Activated naive CD4-positive, alpha-beta T cell treated with anti-CD3 and anti-CD28 coated beads for 36 hours (primary cell): ENCODE measurements at regions of chr6 and their contacts with region 1.

Region 1: DNA sequence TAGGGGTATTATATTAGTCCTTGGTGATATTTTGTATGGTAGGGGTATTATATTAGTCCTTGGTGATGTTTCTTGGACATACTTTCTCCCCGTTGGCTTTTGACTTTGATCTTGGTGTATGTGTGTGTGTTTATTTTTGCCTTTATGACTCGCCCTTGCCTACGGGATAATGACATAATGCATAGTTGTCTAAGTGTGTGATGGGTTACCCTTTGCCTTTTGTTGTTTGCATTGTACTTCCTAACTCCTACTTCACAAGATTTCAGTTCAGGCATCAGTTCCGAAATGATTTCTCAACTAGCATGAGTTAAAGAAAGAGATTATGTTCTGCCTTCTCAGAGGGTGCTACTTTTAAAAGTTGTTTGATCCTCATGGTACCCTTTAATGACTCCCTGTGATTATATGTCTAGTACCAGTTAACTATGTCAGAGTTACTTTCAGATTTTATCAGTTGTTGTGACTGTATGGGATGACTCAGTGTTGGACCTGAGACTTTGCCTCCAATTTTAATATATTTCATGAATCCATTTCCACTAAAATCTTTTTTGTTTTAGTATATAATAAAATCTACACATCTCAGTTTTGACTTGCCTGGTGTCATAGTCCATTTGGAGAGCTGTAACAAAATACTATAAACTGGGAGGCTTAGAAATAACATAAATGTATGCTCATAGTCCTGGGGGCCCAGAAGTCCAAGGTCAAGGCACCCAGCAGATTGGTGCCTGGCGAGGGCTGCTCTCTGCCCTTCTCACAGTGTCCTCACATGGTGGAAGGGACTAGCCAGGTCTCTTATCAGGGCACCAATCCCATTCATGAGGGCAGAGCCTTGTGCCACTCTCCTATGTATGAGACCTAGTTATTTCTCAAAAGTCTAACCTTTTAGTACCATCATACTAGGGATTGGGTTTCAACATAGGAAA is 34.1 kb downstream of the CDYL start:
- DNase-seq: no peak
- H3K4me3 Mint-ChIP-seq: no peak overlapping the region
- H3K27ac Mint-ChIP-seq: peak overlapping the region; percentile 20
- H3K4me1 Mint-ChIP-seq: peaks cover 66% of the 10 kb centered on the region
- H3K27me3 Mint-ChIP-seq: no peaks in the 10 kb centered on the region

Region 2: DNA sequence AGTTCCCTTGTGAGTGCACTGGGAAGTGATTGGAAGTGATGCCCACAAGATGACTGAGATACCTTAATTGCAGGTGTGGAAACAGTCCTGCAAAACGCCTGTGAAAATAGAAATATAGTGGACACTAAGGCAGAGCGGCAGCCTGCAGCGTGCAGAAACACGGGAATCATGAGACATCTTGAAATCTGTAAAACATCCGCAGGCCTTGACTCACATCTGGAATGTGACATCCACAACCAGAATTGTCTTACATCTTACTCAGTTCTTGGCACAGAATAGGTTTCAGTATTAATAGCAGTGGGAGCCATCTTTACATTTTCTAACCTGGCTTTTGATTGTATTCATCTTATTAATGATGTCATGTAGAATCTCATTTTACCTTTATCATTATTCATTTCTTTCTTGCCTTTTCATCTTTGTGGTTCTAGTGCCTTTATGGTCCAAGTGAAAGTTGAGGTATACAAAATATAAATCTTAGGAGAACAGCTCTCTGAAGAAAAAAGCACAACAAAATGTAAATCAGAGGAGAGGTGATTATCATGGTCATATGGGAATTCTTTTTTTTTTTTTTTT is 10.5 kb after region 1 on chr6:
- CTCF ChIA-PET with region 1: interaction called, 3 read pairs
- intact Hi-C with region 1: loop called (anchors 1 kb)
- DNase-seq: peak; percentile 23
- H3K4me3 Mint-ChIP-seq: no peak overlapping the region
- H3K27ac Mint-ChIP-seq: no peak overlapping the region
- H3K4me1 Mint-ChIP-seq: peaks cover 32% of the 10 kb centered on the region
- H3K27me3 Mint-ChIP-seq: no peaks in the 10 kb centered on the region

Region 3: DNA sequence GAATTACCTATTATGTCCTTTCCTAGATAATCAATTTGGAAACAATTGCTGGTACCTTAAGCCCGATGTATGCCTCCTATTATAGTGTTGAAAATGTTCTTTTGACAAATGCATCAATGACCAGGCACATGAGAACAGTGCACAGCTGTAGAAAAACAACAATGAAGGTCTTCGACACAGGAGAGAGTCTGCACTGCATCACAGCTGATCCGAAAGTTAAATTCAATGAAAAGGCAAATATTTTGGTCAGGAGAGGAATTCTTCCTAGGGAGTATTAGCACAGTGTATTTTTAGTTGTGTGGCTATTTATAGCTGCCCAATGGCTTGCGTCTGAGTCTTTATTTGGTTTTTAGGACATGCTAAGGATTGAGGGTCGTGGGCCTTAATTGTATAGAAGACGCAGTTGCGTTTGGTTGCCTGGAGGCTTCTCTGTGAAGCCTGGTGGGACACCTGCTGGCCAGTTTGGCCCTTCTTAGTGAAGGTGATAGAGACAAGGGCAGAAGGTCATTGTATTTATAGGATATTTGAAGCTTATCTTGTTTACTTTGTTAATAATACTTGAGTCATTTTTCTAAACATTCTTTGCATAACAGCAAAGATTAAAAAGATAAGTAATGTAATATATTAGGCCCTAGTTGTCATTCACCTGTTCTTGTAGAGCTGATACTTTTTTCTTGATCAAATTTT is 38.3 kb after region 1 on chr6:
- CTCF ChIA-PET with region 1: no interaction called
- intact Hi-C with region 1: no loop called
- DNase-seq: peak; percentile 21
- H3K4me3 Mint-ChIP-seq: no peak overlapping the region
- H3K27ac Mint-ChIP-seq: no peak overlapping the region
- H3K4me1 Mint-ChIP-seq: peaks cover 56% of the 10 kb centered on the region
- H3K27me3 Mint-ChIP-seq: no peaks in the 10 kb centered on the region

Region 4: DNA sequence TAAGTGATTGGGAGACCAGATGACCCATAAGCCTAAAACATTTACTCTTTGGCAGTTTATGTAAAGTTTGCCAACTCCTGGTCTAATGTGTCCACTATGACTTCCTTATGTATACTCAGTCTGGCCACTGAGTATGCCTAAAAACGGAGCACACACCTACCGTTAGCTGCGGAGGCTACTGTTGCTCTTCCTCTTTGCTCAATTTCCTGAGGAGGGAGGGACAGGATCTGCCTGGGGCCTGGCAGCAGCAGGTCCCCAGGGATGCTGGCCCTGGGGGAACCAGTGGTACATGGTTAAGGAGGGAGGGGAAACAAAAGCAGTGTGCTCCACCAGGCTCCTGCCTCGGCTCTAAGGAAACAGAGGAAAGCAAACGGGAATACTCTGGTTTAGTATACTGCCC is 79.4 kb after region 1 on chr6:
- CTCF ChIA-PET with region 1: no interaction called
- intact Hi-C with region 1: no loop called
- DNase-seq: no peak
- H3K4me3 Mint-ChIP-seq: no peak overlapping the region
- H3K27ac Mint-ChIP-seq: no peak overlapping the region
- H3K4me1 Mint-ChIP-seq: peaks cover 25% of the 10 kb centered on the region
- H3K27me3 Mint-ChIP-seq: no peaks in the 10 kb centered on the region

Region 5: GRCh38 chr6:4957521-4958231 is 147.4 kb after region 1 on chr6:
- CTCF ChIA-PET with region 1: no interaction called
- intact Hi-C with region 1: no loop called
- DNase-seq: no peak
- H3K4me3 Mint-ChIP-seq: no peak overlapping the region
- H3K27ac Mint-ChIP-seq: no peak overlapping the region
- H3K4me1 Mint-ChIP-seq: no peaks in the 10 kb centered on the region
- H3K27me3 Mint-ChIP-seq: no peaks in the 10 kb centered on the region